Activated CD4-positive, alpha-beta T cell treated with anti-CD3 and anti-CD28 coated beads for 36 hours (primary cell): ENCODE measurements at regions of chr9 and their contacts with region 1.

Region 1: GRCh38 chr9:72022841-72023240 is 37.6 kb downstream of the C9orf57 start:
- DNase-seq: no peak
- ATAC-seq: no peak
- H3K4me3 Mint-ChIP-seq: no peak overlapping the region
- H3K27ac Mint-ChIP-seq: no peak overlapping the region
- H3K4me1 Mint-ChIP-seq: no peaks in the 10 kb centered on the region
- H3K27me3 Mint-ChIP-seq: no peaks in the 10 kb centered on the region

Region 2: DNA sequence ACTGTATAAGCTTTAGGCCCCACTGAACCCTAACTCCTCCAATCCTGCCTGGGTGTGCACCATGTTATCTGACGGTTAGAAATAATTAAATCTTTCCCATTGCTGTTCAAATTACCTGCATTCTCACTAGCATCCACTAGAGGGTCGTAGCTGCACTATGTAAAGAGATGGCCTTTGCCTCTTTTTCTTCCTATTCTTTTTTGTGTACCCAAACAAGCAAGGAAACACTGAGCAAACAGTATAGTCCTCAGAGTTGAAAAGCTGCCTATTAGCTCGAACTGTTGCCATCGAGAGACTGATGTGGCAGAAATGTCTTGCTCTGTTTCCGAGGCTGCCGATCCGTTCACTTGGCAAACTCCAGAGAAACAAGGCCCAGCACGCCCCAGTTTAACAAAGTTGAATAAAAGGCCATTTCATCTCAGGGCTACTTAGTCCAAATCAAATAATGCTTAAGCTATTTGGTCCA is 737.6 kb before region 1 on chr9:
- CTCF ChIA-PET with region 1: interaction called, 9 read pairs
- POLR2A ChIA-PET with region 1: no interaction called
- intact Hi-C with region 1: loop called (anchors 2 to 5 kb)
- DNase-seq: peak; percentile 25
- ATAC-seq: peak; percentile 60
- H3K4me3 Mint-ChIP-seq: no peak overlapping the region
- H3K27ac Mint-ChIP-seq: no peak overlapping the region
- H3K4me1 Mint-ChIP-seq: no peaks in the 10 kb centered on the region
- H3K27me3 Mint-ChIP-seq: peaks cover 5% of the 10 kb centered on the region

Region 3: DNA sequence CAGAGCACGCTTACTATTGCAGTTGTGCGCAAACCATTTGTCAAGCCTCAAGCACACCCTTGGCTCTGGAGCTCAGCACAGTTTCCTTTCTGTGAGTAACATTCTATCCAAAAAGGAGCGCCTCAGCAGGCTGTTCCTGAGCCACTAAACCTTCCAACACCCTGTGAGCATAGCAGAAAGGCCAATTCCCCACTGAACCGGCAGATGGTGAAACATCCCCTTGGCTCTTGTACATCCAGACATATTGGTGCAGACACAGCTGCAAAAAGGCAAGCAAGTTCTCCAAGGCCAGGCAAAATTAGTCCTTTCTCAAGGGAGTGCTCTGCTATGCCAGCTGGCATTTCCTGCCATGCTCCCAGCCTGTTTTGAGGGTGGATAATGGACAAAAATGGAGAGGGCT is 210.5 kb before region 1 on chr9:
- CTCF ChIA-PET with region 1: interaction called, 109 read pairs
- POLR2A ChIA-PET with region 1: no interaction called
- intact Hi-C with region 1: loop called (anchors 1 kb)
- DNase-seq: no peak
- ATAC-seq: no peak
- H3K4me3 Mint-ChIP-seq: no peak overlapping the region
- H3K27ac Mint-ChIP-seq: no peak overlapping the region
- H3K4me1 Mint-ChIP-seq: peaks cover 10% of the 10 kb centered on the region
- H3K27me3 Mint-ChIP-seq: no peaks in the 10 kb centered on the region

Region 4: DNA sequence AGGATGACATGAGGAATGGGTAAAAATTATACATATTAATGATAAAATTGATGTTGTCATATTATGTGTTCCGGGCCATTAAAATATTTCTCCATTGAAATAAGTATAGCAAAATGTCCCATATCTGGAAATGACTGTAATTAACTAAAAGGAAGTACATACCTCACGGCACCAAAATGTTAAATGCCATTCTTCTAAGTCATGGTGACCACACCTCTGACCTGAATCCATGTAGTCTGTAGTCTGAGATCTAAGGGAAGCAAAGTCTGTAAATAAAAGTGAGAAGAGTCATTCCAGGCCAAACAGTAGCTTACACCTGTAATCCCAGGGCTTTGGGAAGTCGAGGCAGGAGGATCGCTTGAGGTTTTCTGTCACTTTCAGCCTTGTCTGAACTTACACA is 117.7 kb after region 1 on chr9:
- CTCF ChIA-PET with region 1: no interaction called
- POLR2A ChIA-PET with region 1: no interaction called
- intact Hi-C with region 1: no loop called
- DNase-seq: no peak
- ATAC-seq: no peak
- H3K4me3 Mint-ChIP-seq: no peak overlapping the region
- H3K27ac Mint-ChIP-seq: no peak overlapping the region
- H3K4me1 Mint-ChIP-seq: no peaks in the 10 kb centered on the region
- H3K27me3 Mint-ChIP-seq: peaks cover 13% of the 10 kb centered on the region

Region 5: GRCh38 chr9:72271613-72272478 is 249.0 kb after region 1 on chr9:
- CTCF ChIA-PET with region 1: interaction called, 15 read pairs
- POLR2A ChIA-PET with region 1: no interaction called
- intact Hi-C with region 1: no loop called
- DNase-seq: peak; percentile 66
- ATAC-seq: no peak
- H3K4me3 Mint-ChIP-seq: no peak overlapping the region
- H3K27ac Mint-ChIP-seq: no peak overlapping the region
- H3K4me1 Mint-ChIP-seq: no peaks in the 10 kb centered on the region
- H3K27me3 Mint-ChIP-seq: no peaks in the 10 kb centered on the region

Region 6: GRCh38 chr9:72454871-72455491 is 432.1 kb after region 1 on chr9:
- CTCF ChIA-PET with region 1: no interaction called
- POLR2A ChIA-PET with region 1: no interaction called
- intact Hi-C with region 1: no loop called
- DNase-seq: no peak
- ATAC-seq: no peak
- H3K4me3 Mint-ChIP-seq: no peak overlapping the region
- H3K27ac Mint-ChIP-seq: no peak overlapping the region
- H3K4me1 Mint-ChIP-seq: peaks cover 10% of the 10 kb centered on the region
- H3K27me3 Mint-ChIP-seq: no peaks in the 10 kb centered on the region

Region 7: DNA sequence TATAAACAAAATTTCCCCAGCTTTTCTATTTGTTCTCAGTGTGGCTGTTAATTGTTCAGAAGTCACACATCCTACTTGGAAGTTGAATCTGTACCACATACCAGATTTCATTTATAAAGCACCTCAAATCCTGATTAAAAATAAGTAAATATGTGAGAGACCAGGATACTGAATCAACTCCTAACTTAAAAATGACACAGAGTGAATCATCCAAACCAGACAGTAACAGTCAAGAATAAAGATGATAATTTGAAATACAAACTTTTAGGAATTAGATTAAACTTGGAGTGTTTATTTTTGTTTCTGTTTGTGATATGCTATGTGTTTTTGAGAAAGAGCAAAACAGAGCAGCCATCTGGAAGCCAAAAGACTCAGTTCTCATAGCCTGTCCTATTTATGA is 1841.1 kb after region 1 on chr9:
- CTCF ChIA-PET with region 1: no interaction called
- POLR2A ChIA-PET with region 1: no interaction called
- intact Hi-C with region 1: no loop called
- DNase-seq: no peak
- ATAC-seq: no peak
- H3K4me3 Mint-ChIP-seq: no peak overlapping the region
- H3K27ac Mint-ChIP-seq: no peak overlapping the region
- H3K4me1 Mint-ChIP-seq: no peaks in the 10 kb centered on the region
- H3K27me3 Mint-ChIP-seq: no peaks in the 10 kb centered on the region